Natural killer cell (primary cell): ENCODE measurements at regions of chr9 and their contacts with region 1.

Region 1: DNA sequence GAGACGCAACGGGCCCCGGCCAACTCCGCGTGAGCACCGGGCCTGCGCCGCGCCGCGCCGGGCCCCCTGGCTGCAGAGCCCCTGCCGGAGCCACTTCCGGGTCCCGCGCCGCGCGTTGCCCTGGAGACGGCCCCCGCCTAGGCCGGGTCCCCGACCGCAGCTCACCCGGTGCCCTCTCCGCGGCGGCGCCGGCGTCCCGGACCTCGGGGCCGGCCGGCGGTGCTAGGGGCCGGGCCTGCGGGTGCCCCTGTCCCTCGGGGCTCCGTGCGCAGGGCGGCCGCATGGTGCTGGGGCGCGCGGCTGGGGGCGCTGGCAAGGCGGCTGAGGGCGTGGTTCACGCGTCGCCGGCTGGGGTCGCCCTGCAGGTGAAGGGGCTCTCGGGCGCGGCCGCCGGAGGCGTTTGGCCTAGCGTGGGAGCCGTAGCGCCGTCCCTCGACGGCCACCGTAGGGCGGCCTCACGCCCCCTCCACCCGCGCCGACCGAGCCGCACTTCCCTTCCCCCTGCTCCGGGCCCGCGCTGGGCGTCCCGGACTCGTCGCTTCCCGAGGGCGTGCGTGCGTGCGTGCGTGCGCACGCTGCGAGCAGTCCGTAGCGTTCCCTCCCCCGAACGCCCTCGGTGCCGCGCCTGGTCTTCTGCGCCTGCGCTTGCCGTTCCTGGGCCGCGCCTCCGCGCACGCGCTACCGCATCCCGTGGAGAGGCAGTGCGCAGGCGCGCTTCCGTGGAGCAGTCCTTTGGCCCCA is at the start of gene TMEM250:
- DNase-seq: peak; percentile 93 to 99
- ATAC-seq: peak; percentile 87 to 95 (median 88)
- H3K4me3 ChIP-seq: peak within 1 kb of the TSS; percentile 36
- H3K4me3 Mint-ChIP-seq: peak within 1 kb of the TSS; percentile 86
- H3K27ac ChIP-seq: peak within 1 kb of the TSS; percentile 60
- H3K27ac Mint-ChIP-seq: peak within 1 kb of the TSS; percentile 53 to 85
- H3K4me1 ChIP-seq: peaks cover 32% of the 10 kb centered on the region
- H3K4me1 Mint-ChIP-seq: peaks cover 0 to 13% of the 10 kb centered on the region in 2 donors
- H3K27me3 ChIP-seq: no peaks in the 10 kb centered on the region
- H3K27me3 Mint-ChIP-seq: no peaks in the 10 kb centered on the region
- CTCF ChIP-seq: no peak
- total RNA-seq, gene TMEM250: 19.5 to 34.3 (median 33.6) TPM

Region 2: DNA sequence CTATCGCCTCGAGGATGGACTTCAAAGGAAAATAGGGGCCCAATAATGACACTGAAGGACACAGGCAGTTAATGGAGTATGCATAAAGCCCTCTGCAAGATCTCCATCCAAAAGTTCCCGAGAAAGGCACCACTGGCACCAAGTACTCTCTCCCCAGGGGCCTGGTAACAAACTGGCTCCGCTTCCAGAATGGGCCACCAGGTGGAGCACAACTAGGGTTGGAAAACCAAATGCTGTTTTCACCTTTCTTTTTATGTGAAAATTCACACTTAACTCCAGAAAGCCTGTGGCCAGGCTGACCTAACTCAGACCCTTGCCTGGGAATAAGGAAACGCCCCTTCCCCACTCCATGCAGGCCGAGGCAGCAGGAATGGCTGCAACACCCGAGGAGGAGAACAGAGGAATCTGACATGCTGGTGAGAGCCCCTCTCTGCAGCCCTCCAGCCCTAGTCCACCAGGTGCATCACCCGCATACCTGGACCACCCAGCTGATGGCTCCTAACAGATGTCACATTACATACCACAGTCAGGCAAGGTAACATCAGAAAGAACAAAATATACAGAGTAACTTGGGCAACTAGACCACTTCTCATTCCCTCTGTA is 253.9 kb before region 1 on chr9:
- intact Hi-C with region 1: loop called (anchors 1 kb)
- DNase-seq: peak; percentile 59 to 78
- ATAC-seq: peak; percentile 57 to 72 (median 68)
- H3K4me3 ChIP-seq: no peak overlapping the region
- H3K4me3 Mint-ChIP-seq: no peak overlapping the region
- H3K27ac ChIP-seq: no peak overlapping the region
- H3K27ac Mint-ChIP-seq: peak overlapping the region in 1 of 2 donors; percentile 39
- H3K4me1 ChIP-seq: peaks cover 7% of the 10 kb centered on the region
- H3K4me1 Mint-ChIP-seq: peaks cover 14 to 23% of the 10 kb centered on the region in 2 donors
- H3K27me3 ChIP-seq: no peaks in the 10 kb centered on the region
- H3K27me3 Mint-ChIP-seq: no peaks in the 10 kb centered on the region
- CTCF ChIP-seq: peak; percentile 85

Region 3: DNA sequence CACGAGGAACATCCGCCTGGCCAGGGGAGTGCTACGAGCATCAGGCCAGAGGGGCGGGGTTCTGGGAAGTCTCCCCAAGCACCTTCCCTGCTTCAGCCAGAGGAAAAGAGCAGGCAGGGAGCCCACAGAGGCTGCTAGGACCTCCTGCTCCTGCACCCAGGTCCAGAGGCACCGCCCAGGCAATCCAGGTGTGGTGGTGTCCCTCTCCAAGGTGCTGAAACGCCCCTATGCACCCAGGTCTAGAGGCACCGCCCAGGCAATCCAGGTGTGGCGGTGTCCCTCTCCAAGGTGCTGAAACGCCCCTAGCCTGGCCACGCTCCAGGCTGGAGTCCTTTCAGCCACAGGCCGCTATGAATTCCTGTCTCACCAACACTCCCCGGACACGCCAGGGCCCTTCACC is 146.6 kb before region 1 on chr9:
- intact Hi-C with region 1: loop called (anchors 1 kb)
- DNase-seq: peak in 1 of 2 donors; percentile 80
- ATAC-seq: no peak
- H3K4me3 ChIP-seq: no peak overlapping the region
- H3K4me3 Mint-ChIP-seq: no peak overlapping the region
- H3K27ac ChIP-seq: no peak overlapping the region
- H3K27ac Mint-ChIP-seq: no peak overlapping the region
- H3K4me1 ChIP-seq: peaks cover 18% of the 10 kb centered on the region
- H3K4me1 Mint-ChIP-seq: peaks cover 7 to 13% of the 10 kb centered on the region in 2 donors
- H3K27me3 ChIP-seq: no peaks in the 10 kb centered on the region
- H3K27me3 Mint-ChIP-seq: peaks cover 0 to 7% of the 10 kb centered on the region in 2 donors
- CTCF ChIP-seq: no peak

Region 4: DNA sequence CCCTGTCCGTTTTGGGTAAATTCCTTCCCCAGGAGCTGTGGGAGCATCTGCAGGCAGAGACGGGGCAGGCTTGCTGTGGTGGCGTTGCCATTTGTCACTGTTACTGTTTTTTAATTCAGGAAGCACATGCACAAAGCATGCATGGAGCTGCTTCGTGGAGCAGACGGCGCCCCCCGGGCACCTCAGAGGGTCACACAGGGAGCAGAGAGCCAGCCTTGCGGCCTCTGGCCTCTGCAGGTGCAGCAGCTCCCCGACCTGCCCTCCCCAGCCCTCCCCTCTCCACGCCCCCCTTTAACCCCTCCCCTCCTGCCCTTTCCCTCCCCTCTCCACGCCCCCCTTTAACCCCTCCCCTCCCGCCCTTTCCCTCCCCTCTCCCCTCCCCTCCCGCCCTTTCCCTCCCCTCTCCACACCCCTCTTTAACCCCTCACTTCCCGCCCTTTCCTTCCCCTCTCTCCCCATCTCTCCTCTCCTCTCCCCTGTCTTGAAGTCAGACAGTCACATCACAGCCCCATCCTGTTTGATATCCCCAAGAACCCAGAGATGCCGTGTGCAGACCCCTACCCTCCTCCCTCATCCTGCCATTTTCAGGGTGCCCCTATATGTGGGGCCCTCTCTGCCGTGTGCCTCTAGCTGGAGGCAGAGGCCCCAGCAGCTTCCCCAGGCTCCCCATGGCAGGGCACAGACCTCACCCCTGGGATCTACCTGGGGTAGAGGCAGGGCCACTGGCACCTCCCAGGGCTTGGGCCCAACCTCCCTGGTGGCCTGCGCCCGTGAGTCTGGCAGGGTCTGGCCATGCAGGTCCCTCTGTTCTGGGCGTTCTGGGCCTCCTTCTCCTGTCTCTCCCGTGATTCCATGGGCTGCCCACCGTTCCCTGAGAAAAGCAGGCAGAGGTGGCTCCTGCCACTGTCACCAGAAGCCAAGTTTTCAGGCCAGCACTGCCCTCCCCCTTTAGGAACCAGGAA is 127.7 kb before region 1 on chr9:
- intact Hi-C with region 1: no loop called
- DNase-seq: peak in 1 of 2 donors; percentile 89
- ATAC-seq: peak; percentile 80 to 82 (median 82)
- H3K4me3 ChIP-seq: no peak overlapping the region
- H3K4me3 Mint-ChIP-seq: no peak overlapping the region
- H3K27ac ChIP-seq: no peak overlapping the region
- H3K27ac Mint-ChIP-seq: peak overlapping the region in 1 of 2 donors; percentile 44
- H3K4me1 ChIP-seq: peaks cover 49% of the 10 kb centered on the region
- H3K4me1 Mint-ChIP-seq: peaks cover 0 to 32% of the 10 kb centered on the region in 2 donors
- H3K27me3 ChIP-seq: no peaks in the 10 kb centered on the region
- H3K27me3 Mint-ChIP-seq: no peaks in the 10 kb centered on the region
- CTCF ChIP-seq: no peak

Region 5: DNA sequence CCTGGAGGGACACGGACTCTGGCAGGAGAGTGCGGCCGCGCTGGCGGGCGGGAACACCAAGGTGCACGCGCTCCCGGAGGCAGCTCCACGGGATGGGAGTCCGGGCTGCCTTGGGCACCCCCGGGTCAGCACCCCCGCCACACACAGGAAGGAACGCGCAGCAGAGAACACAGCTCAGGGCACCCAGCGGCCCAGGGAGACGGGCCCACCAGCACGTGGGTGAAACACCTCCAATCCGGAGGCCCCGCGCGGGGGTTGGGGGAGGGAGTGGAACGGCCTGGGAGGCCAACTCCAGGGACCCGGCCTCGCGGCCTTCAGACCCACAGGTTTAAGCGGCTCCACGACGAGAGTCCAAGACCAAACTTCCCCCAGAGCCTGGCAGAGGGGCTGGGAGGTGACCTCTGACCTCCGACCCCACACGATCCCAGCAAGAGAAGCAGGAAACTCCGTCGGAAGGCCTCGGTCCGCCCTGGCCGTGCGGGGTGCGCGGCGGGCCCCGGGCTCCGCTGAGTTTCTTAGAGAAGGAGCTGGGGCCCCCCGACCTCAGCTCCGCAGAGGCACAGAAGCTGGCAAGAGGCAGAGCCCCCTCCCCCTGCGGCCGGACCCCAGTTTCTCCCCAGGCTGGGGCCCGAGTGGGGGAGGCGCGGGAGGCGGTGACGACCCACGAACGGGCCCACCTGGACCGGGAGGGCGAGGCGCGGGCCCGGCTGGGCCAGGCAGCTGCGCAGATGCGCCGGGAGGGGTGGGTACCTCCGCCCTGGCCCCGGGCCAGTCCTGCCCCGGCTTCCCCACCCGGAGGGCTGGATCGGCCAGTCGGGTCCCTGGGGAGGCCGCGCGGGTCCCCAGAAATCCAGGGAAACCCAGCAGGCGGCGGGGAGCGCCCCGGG is 24.3 kb before region 1 on chr9:
- intact Hi-C with region 1: loop called (anchors 1 kb)
- DNase-seq: peak; percentile 64 to 65
- ATAC-seq: peak; percentile 74 to 79 (median 78)
- H3K4me3 ChIP-seq: peak overlapping the region; percentile 50
- H3K4me3 Mint-ChIP-seq: peak overlapping the region; percentile 89
- H3K27ac ChIP-seq: peak overlapping the region; percentile 72
- H3K27ac Mint-ChIP-seq: peak overlapping the region; percentile 62 to 83
- H3K4me1 ChIP-seq: peaks cover 51% of the 10 kb centered on the region
- H3K4me1 Mint-ChIP-seq: peaks cover 10 to 51% of the 10 kb centered on the region in 2 donors
- H3K27me3 ChIP-seq: no peaks in the 10 kb centered on the region
- H3K27me3 Mint-ChIP-seq: no peaks in the 10 kb centered on the region
- CTCF ChIP-seq: no peak

Region 6: DNA sequence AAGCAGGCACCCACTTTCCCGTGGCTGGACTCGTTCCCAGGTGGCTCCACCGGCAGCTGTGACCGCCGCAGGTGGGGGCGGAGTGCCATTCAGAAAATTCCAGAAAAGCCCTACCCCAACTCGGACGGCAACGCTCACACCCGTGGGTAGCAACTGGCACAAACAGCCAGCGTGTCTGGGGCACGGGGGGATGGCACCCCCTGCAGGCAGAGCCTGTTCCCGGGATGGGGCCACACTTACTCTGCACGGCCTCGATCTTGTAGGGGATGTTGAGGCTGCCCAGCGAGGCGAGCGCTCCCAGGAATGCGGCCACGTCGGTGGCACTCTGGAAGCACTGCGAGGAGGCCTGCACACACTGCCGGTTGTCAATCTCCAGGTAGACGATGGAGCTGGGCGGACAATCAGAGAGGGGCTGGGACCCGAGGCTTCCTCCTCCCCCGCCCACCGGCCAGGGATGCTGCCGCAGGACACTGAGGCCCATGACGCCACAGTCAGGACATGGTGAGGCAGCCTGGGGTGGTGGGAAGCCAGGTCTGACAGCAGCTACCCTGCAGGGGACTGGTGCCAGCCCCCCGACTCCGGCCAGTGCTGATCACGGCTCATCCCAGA is 384.6 kb after region 1 on chr9:
- intact Hi-C with region 1: no loop called
- DNase-seq: no peak
- ATAC-seq: no peak
- H3K4me3 ChIP-seq: no peak overlapping the region
- H3K4me3 Mint-ChIP-seq: no peak overlapping the region
- H3K27ac ChIP-seq: no peak overlapping the region
- H3K27ac Mint-ChIP-seq: no peak overlapping the region
- H3K4me1 ChIP-seq: peaks cover 15% of the 10 kb centered on the region
- H3K4me1 Mint-ChIP-seq: no peaks in the 10 kb centered on the region
- H3K27me3 ChIP-seq: no peaks in the 10 kb centered on the region
- H3K27me3 Mint-ChIP-seq: no peaks in the 10 kb centered on the region
- CTCF ChIP-seq: no peak